BJ (cell line): ENCODE measurements at regions of chr9 and their contacts with region 1.

Region 1: GRCh38 chr9:17063535-17064135 is 71.2 kb upstream of the CNTLN start:
- DNase-seq: no peak
- H3K4me3 ChIP-seq: no peak overlapping the region
- H3K27me3 ChIP-seq: no peaks in the 10 kb centered on the region
- CTCF ChIP-seq: peak; percentile 83

Region 2: GRCh38 chr9:16171911-16172310 is 891.7 kb before region 1 on chr9:
- CTCF ChIA-PET with region 1: no interaction called
- POLR2A ChIA-PET with region 1: no interaction called
- DNase-seq: no peak
- H3K4me3 ChIP-seq: no peak overlapping the region
- H3K27me3 ChIP-seq: no peaks in the 10 kb centered on the region; the same call in 1 of the 2 replicates
- CTCF ChIP-seq: no peak

Region 3: DNA sequence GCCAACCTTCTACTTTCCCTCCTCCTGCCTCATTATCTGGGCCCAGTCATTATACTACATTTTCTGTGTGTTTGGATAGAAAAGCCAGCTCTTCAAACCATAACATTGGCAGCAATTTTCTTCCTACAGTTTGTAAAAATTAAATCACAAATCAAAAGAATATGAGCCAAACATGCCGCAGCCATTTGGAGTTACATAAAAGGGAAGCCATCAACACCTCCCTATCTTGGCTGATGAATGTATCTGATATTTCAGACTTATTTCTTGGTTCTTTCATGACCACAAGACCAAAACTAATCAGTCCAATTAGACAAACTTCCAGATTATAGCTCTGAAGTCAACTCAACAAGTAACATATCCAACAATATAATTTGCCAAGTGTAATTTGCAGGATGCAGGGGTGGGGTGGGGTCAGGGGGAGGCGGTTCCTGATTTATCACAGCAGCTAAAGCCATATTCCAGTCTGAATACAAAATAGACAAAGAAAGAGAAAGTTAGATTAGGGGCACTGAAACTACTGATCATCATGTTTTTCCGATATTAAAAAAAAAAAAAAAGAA is 18.2 kb before region 1 on chr9:
- CTCF ChIA-PET with region 1: interaction called, 10 read pairs
- POLR2A ChIA-PET with region 1: no interaction called
- DNase-seq: no peak
- H3K4me3 ChIP-seq: no peak overlapping the region
- H3K27me3 ChIP-seq: 0 out of 2 replicates have a peak, but pooled peaks cover 1% of the 10 kb centered on the region
- CTCF ChIP-seq: no peak

Region 4: GRCh38 chr9:17052626-17053025 is 11.0 kb before region 1 on chr9:
- CTCF ChIA-PET with region 1: interaction called, 25 read pairs
- POLR2A ChIA-PET with region 1: no interaction called
- DNase-seq: no peak
- H3K4me3 ChIP-seq: no peak overlapping the region
- H3K27me3 ChIP-seq: no peaks in the 10 kb centered on the region
- CTCF ChIP-seq: no peak

Region 5: GRCh38 chr9:17075758-17076485 is 12.3 kb after region 1 on chr9:
- CTCF ChIA-PET with region 1: interaction called, 17 read pairs
- POLR2A ChIA-PET with region 1: no interaction called
- DNase-seq: no peak
- H3K4me3 ChIP-seq: no peak overlapping the region
- H3K27me3 ChIP-seq: no peaks in the 10 kb centered on the region
- CTCF ChIP-seq: no peak

Region 6: DNA sequence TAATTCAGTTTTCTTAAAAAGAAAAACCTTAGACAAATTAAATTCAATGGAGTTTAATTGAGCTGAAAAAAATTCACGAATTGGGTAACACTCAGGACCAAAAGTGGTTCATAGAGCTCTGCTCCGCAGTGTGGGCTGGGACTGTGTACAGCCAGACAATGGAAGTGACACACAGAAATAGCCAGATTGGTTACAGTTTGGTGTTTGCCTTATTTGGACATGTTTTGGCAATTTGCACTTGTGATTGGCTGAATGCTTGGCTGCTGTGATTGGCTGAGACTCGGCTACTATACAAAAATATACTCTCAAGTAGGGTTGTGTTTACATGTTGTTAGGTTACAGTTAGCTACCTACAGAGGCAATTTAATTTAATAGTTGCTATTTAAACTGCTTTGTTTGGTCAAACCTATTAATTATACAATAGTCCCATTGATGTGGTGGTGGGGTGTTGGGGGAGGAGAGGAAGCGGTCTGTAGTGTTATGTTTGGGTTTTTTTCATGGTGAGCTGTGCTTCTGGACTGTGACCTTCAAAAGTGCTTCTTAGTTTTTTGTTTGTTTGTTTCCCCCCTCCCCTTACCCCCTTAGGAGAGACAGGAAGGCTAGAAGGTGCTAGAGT is 166.4 kb after region 1 on chr9:
- CTCF ChIA-PET with region 1: no interaction called
- POLR2A ChIA-PET with region 1: no interaction called
- DNase-seq: no peak
- H3K4me3 ChIP-seq: no peak overlapping the region
- H3K27me3 ChIP-seq: no peaks in the 10 kb centered on the region
- CTCF ChIP-seq: no peak